ENCODE measurements at regions of chr3 and their contacts with region 1.

Region 1: DNA sequence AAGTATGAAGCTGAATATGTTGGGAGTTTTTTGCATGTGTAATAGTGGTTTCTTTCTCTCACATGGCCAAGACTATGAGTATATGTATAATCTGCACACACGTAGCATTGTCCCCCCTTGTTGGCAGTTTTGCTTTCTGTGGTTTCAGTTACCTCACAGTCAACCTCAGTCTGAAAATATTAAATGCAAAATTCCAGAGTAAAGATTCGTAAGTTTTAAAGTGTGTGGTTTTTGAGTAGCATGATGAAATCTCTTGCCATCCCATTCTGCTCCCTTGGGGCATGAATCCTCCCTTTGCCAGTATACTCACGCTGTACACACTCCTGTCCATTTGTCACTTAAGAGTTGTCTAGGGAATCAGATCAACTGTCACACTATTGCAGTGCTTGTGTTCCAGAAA is 742.0 kb upstream of the CCDC54 start:
- DNase-seq: no peak

Region 2: DNA sequence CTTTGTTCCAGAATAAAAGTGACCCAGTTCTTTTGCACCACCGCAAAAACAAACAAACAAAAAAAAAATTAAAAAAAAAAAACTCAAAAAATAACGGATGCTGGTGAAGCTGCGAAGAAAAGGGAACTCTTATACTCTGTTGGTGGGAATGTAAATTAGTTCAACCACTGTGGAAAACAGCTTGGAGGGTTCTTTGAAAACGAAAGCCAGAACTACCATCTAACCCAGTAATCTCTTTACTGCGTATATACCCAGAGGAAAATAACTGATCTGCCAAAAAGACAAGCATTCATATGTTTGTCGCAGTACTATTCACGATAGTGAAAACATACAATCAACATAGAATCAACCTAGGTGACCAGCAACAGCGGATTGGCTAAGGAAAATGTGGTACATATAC is 467.5 kb before region 1 on chr3:
- in situ Hi-C with region 1: no loop called
- DNase-seq: no peak

Region 3: DNA sequence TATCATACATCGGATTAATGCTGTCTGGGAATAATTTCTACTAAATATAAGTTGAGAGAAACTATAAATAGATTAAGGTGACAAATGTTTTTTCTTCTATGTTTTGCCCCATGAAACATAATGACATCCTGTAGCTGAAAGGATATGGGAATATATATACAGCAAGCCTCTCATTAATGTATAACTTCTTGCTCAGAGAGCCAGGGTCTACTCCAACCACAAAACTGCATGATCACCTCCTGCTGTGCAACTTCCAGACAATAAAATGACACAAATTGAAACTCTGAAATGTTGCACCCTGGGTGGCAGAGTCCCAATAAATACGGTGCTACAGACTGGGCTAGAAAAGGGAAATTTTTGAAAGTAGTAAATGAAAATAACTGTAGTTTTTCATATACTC is 194.6 kb before region 1 on chr3:
- in situ Hi-C with region 1: no loop called
- DNase-seq: no peak

Region 4: DNA sequence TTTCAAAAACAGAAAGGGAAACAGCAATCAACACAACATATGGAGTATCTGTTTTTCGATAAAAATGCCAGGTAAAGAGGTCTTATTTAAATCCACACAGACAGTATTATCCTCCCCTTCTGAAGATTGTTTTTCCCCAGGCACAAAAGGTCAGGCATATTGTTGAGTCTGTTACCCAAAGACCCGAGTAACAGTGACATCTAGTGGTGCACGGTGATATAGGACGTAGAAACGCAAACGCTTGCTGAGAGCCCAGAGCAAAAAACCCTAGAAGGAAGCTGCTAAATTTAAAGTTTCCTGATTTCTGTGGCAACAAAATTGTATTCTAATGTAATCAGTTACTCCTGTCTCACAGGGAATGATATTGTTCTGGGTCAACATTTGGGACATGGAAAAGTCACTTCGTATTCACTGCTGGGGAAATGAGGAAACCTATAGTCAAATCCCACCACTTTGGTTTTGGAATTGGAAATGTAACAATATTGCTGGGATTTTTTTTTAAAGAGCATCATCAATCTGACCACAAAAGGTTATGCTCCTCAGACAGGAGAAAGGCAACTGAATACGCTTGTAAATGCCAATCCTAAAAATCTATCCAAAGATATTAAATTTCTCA is 429.3 kb after region 1 on chr3:
- in situ Hi-C with region 1: loop called (anchors 25 kb)
- DNase-seq: peak; percentile 81

Region 5: GRCh38 chr3:107241224-107241623 is 606.0 kb after region 1 on chr3:
- in situ Hi-C with region 1: no loop called
- DNase-seq: peak; percentile 55